ENCODE measurements at regions of chr3 and their contacts with region 1.

Region 1: GRCh38 chr3:18758047-18758704 is 333.0 kb upstream of the SATB1 start:
- DNase-seq: no peak
- ATAC-seq: peak; percentile 95
- H3K4me3 Mint-ChIP-seq: no peak overlapping the region
- H3K27ac Mint-ChIP-seq: peak overlapping the region; percentile 90
- H3K4me1 Mint-ChIP-seq: peaks cover 48% of the 10 kb centered on the region
- H3K27me3 Mint-ChIP-seq: no peaks in the 10 kb centered on the region

Region 2: GRCh38 chr3:18207226-18207625 is 551.0 kb before region 1 on chr3:
- CTCF ChIA-PET with region 1: no interaction called
- POLR2A ChIA-PET with region 1: no interaction called
- intact Hi-C with region 1: no loop called
- DNase-seq: peak; percentile 52
- ATAC-seq: peak; percentile 91
- H3K4me3 Mint-ChIP-seq: no peak overlapping the region
- H3K27ac Mint-ChIP-seq: peak overlapping the region; percentile 38
- H3K4me1 Mint-ChIP-seq: peaks cover 21% of the 10 kb centered on the region
- H3K27me3 Mint-ChIP-seq: peaks cover 15% of the 10 kb centered on the region

Region 3: DNA sequence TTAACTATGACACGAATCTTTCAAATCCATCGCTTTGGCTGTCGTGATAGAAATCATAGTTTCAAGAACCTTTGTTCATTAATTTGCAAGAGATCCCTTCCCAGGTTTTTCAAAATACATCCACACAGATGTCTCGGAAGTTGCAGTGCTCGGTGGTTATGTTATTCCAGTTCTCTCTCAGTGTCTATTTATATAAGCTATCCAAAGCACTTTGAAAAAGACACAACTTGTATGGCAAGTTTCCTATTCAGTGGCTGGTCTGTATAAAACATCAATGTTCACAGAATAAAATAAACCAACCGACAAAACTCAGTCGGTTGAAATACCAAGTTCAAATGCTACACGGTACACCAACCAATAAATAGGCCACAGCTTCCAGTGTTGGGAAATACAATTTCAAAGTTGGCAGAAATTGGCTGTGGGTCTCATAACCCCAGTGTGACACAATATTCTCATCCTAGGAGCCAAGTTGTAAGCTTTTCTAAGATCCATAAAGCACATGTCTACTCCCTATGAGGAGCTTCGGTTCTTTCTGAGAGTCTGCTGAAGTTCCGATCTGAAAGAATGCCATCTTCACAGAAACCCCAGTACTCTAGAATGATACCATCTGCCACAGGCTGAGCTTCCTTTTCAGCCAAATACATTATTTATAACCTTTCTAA is 356.7 kb before region 1 on chr3:
- CTCF ChIA-PET with region 1: interaction called, 12 read pairs
- POLR2A ChIA-PET with region 1: no interaction called
- intact Hi-C with region 1: no loop called
- DNase-seq: no peak
- ATAC-seq: peak; percentile 7
- H3K4me3 Mint-ChIP-seq: peak overlapping the region; percentile 46
- H3K27ac Mint-ChIP-seq: peak overlapping the region; percentile 80
- H3K4me1 Mint-ChIP-seq: peaks cover 95% of the 10 kb centered on the region
- H3K27me3 Mint-ChIP-seq: no peaks in the 10 kb centered on the region

Region 4: DNA sequence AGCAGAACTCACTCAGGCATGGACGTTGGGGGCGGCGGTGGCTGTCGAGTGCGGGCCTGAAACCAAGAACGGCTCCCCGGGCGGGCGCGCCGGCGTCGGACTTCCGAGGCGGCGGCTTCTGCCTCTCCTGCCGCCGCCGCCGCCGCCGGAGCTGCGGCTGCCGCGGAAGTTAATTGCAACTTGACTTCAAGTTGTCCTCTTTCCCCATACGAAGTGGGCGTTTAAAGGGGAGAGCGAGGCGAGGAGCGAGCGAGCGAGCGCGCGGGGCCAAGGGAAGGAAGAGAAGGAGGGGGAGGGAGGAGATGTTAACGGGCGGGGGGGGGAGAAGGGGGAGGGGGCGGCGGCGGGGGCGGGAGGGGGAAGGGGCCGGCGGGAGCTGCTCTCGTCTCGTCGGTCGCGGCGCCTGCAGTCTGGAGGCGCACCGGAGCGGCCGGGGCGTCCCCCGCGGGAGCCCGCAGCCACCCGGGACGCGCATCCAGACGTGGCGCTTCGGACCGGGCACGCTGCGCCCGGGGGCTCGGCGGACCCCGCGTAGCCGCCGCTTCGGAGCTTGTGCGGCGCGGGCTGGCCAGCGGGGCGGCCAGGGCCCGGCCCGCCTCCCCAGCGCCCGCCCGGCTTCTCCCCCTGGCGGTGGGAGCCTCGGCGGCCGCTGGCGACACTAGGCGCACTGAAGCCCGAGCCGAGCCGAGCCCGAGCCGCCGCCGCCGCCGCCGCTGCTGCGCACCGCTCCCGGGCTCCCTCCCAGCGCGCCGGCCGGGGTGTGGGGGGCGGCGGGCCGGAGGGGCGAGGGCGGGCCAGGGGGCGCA is 313.4 kb before region 1 on chr3:
- CTCF ChIA-PET with region 1: interaction called, 5 read pairs
- POLR2A ChIA-PET with region 1: interaction called, 5 read pairs
- intact Hi-C with region 1: loop called in 1 of 2 experiments (anchors 1 kb)
- DNase-seq: peak; percentile 89
- ATAC-seq: peak; percentile 66
- H3K4me3 Mint-ChIP-seq: peak overlapping the region; percentile 96
- H3K27ac Mint-ChIP-seq: peak overlapping the region; percentile 91
- H3K4me1 Mint-ChIP-seq: peaks cover 25% of the 10 kb centered on the region
- H3K27me3 Mint-ChIP-seq: no peaks in the 10 kb centered on the region

Region 5: DNA sequence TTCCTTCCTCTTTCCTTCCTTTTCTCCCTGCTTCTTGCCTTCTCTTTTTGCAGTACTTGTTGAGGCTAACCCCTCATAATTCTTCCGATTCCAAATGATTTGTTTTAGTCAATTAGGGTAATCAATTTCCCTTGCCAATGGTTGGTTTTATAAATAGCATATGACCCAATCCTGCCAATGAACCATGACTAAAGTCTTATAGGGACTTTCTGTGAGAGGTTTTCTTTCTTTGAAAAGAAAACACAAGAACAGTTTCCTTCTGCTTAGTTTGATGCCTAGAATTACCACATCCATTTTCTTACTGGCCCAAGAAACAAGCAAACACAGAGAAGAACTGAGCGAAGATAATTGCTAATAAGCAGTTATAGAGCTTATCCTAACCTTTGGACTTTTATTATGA is 40.6 kb before region 1 on chr3:
- CTCF ChIA-PET with region 1: interaction called, 12 read pairs
- POLR2A ChIA-PET with region 1: interaction called, 6 read pairs
- intact Hi-C with region 1: no loop called
- DNase-seq: no peak
- ATAC-seq: peak; percentile 38
- H3K4me3 Mint-ChIP-seq: peak overlapping the region; percentile 8
- H3K27ac Mint-ChIP-seq: peak overlapping the region; percentile 97
- H3K4me1 Mint-ChIP-seq: peaks cover 71% of the 10 kb centered on the region
- H3K27me3 Mint-ChIP-seq: no peaks in the 10 kb centered on the region

Region 6: GRCh38 chr3:18772699-18773305 is 14.6 kb after region 1 on chr3:
- CTCF ChIA-PET with region 1: interaction called, 10 read pairs
- POLR2A ChIA-PET with region 1: no interaction called
- intact Hi-C with region 1: no loop called
- DNase-seq: no peak
- ATAC-seq: peak; percentile 79
- H3K4me3 Mint-ChIP-seq: no peak overlapping the region
- H3K27ac Mint-ChIP-seq: no peak overlapping the region
- H3K4me1 Mint-ChIP-seq: peaks cover 58% of the 10 kb centered on the region
- H3K27me3 Mint-ChIP-seq: no peaks in the 10 kb centered on the region

Region 7: DNA sequence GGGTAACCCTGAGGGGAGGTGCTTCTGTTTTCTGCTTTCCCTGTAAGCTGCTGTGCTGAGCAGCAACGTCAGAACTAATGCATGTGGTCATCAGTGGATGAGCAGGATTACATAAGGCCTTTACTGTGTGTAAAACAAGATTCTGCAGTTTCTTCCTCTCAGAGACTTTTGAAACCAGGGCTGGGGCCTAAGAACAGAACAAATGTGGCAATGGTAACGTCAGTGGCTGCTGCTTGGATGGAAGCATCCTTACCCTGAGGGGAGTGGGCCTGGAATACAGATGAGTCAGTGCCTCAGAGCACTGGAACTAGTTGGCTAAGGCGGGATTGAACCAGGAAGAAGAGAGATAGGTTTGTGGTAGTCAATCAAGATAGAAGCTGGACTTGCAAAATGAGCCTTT is 209.9 kb after region 1 on chr3:
- CTCF ChIA-PET with region 1: no interaction called
- POLR2A ChIA-PET with region 1: no interaction called
- intact Hi-C with region 1: no loop called
- DNase-seq: no peak
- ATAC-seq: no peak
- H3K4me3 Mint-ChIP-seq: no peak overlapping the region
- H3K27ac Mint-ChIP-seq: no peak overlapping the region
- H3K4me1 Mint-ChIP-seq: no peaks in the 10 kb centered on the region
- H3K27me3 Mint-ChIP-seq: no peaks in the 10 kb centered on the region